ENCODE measurements at regions of chr1 and their contacts with region 1.

Region 1: DNA sequence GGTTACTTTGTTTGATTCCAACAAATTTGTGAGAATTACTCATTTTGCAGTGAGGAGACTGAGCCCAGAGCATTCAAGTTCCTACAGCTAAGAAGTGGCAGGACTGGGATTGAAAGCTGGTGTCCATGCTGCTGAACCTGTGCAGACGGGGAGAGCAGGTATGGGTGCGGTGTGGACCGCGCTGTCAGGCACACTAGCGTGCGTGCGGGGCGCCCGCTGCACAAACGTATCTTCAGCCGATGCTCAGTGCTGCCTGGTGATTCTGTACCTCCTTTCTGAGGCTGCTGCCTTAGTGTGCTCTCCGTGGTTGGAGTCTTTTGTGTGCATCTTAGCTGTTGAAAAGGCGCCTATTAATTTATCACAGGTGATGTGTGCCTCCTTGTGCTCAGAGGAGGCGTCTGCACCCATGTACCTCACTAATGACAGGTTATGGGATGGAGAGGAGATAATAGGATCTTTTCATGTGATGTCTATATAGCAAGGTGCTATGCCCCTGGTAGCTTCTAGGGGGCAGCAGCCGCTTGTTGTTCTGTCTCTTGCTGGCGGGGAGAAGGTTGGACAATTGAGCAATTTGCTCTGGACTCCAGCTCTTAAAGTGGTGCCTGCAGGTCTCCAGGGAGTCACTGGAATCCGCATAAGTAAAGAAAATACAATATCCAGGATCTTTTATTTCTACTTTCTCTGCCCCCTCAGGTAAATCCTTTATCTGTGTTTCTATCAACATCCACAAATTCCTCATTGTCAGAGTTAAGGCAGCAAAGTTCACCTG is 32.5 kb downstream of the PEX14 start:
- DNase-seq: peak; percentile 70
- ATAC-seq: peak; percentile 39
- H3K4me3 ChIP-seq: no peak overlapping the region
- H3K27ac ChIP-seq: no peak overlapping the region
- H3K4me1 ChIP-seq: peaks cover 42% of the 10 kb centered on the region
- H3K27me3 ChIP-seq: no peaks in the 10 kb centered on the region
- CTCF ChIP-seq: peak; percentile 89

Region 2: DNA sequence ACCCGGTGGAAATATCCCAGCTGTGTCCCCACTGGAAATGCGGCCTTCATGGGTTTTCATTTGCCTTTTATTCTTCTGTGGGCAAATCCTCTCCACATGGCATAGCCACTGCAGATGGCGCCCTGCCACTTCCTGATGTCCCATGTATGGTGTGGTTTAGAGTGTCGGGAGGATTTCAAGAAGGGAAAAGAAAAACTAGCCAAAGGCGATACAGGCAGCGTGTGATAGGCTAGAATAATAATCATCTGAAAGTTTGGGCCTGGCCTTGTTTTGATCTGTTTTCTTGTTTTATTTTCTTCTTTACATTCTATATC is 91.1 kb after region 1 on chr1:
- CTCF ChIA-PET with region 1: no interaction called
- POLR2A ChIA-PET with region 1: no interaction called
- intact Hi-C with region 1: loop called (anchors 1 kb)
- DNase-seq: peak; percentile 10
- ATAC-seq: no peak
- H3K4me3 ChIP-seq: no peak overlapping the region
- H3K27ac ChIP-seq: peak overlapping the region; percentile 88
- H3K4me1 ChIP-seq: peaks cover 23% of the 10 kb centered on the region
- H3K27me3 ChIP-seq: no peaks in the 10 kb centered on the region
- CTCF ChIP-seq: 0 out of 2 replicates have a peak, but pooled peaks have one; percentile 29

Region 3: GRCh38 chr1:10635085-10635896 is 128.0 kb after region 1 on chr1:
- CTCF ChIA-PET with region 1: interaction called, 3 read pairs
- POLR2A ChIA-PET with region 1: no interaction called
- intact Hi-C with region 1: loop called (anchors 1 kb)
- DNase-seq: peak; percentile 79
- ATAC-seq: peak; percentile 73
- H3K4me3 ChIP-seq: peak overlapping the region; percentile 46; the same call in 1 of the 2 replicates
- H3K27ac ChIP-seq: peak overlapping the region; percentile 92
- H3K4me1 ChIP-seq: peaks cover 24% of the 10 kb centered on the region
- H3K27me3 ChIP-seq: no peaks in the 10 kb centered on the region
- CTCF ChIP-seq: peak; percentile 51

Region 4: DNA sequence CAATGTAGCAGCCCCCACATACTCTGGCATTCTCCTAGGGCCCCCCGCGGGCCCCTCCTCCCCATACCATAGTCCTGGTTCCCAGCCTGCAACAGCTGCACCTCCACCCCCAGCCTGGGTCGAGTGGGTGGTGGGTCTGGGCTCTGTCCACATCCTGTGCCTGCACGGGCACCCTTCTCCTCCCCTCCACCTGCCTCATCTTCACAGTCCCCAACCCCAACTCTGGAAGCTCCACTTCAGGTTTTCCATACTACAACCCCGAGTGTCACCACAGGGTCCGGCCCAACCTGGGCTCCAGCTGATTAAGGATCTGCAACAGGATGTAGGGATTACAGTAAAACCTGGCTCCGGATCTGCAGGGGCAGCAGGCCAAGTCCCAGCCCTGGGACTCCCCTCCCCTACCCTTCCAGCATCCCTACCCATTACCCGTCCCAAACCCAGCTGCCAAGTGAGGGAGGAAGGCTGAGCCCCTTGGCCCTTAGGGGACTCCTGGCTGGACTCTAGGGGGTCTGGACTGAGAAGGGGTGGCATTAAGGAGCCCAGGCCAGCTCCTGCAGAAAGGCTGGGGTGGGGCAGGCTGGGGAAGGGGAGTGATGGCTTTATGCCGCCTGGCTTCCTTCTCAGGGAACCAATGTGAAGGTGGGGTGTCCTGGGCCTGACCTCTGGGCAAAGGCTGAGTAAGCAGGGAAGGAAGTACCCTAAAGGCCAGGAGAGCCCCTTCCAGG is 172.4 kb after region 1 on chr1:
- CTCF ChIA-PET with region 1: interaction called, 3 read pairs
- POLR2A ChIA-PET with region 1: no interaction called
- intact Hi-C with region 1: loop called (anchors 5 kb)
- DNase-seq: peak; percentile 82
- ATAC-seq: peak; percentile 52
- H3K4me3 ChIP-seq: no peak overlapping the region
- H3K27ac ChIP-seq: no peak overlapping the region
- H3K4me1 ChIP-seq: peaks cover 16% of the 10 kb centered on the region
- H3K27me3 ChIP-seq: no peaks in the 10 kb centered on the region
- CTCF ChIP-seq: no peak

Region 5: DNA sequence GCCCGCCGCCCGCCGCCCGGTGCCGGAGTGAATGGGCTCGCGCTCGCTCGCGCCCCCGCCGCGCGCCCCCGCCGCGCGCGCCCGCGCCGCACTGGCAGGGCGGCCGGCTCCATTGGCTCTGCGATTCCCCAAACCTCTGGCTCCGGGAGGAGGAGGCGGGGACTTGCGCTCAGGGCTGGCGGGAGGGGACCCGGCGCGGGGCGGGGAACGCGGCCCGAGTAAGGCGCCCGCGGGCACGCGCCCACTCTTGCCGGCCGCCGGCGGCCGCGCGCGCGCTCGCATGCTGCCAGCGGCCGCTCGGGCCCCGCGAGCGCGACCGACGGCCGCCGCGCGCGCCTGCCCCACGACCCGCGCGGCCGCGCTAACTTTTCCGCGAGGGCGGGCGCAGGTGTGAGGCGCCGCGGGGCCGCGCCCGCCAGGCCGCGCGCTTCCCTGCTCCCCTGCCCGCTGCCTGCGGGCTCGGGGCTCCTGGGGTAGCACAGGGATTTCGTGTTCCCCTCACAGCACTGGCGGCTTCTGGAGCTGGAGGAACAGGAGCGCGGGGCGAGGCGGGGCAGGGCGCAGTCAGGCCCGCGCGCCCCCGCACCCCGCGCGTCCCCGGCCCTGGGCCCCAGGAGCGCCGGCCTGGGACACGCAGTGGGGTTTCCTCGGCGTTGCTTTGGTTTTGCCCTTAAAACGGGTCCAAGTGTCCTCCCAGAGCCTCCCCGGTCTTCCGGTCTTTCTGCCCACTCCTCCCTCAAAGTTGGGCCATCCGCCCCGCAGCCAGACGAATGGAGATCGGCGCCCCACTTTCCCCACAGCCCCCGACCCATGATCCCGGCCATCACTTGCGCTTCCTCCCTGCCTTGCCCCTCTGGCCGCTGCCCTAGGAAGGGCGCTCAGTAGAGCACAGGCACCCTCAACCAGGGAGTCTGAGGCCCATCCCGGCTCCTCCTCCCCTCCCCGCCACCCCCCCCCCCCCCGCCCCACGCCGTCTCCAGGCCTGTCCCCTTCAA is 187.6 kb after region 1 on chr1:
- CTCF ChIA-PET with region 1: no interaction called
- POLR2A ChIA-PET with region 1: no interaction called
- intact Hi-C with region 1: loop called (anchors 2 kb)
- DNase-seq: peak; percentile 86
- ATAC-seq: peak; percentile 75
- H3K4me3 ChIP-seq: peak overlapping the region; percentile 63
- H3K27ac ChIP-seq: no peak overlapping the region
- H3K4me1 ChIP-seq: peaks cover 29% of the 10 kb centered on the region
- H3K27me3 ChIP-seq: no peaks in the 10 kb centered on the region
- CTCF ChIP-seq: no peak

Region 6: DNA sequence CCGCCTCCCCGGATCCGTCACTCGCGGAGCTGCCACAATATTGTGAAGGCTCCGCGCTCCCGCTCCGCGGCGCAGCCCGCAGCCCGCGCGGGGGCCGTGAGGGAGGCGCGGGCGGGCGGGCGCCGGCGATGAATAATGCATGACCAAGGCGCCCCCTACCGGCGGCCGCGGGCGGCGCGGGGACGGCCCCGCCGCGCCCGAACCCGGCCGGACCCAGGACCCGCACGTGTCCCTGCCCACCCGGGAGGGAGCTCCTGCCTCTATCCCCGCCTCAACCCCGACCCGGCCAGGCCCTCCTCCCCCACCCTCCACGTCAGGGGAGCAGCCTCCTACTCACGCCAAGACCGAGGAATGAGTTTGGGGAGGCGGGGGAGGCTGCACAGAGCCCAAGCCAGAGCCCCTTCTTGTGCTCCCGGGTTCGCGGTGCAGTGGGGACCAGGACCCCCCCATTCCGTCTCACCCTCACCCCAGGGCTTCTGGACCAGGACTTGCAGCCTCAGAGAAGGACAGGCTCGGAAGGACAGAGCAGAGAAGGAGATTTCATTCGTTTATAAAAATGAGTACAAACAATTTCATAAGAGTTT is 359.9 kb after region 1 on chr1:
- CTCF ChIA-PET with region 1: no interaction called
- POLR2A ChIA-PET with region 1: no interaction called
- intact Hi-C with region 1: loop called (anchors 2 kb)
- DNase-seq: peak; percentile 69
- ATAC-seq: peak; percentile 88
- H3K4me3 ChIP-seq: peak overlapping the region; percentile 67
- H3K27ac ChIP-seq: no peak overlapping the region
- H3K4me1 ChIP-seq: peaks cover 4% of the 10 kb centered on the region; the same call in 1 of the 2 replicates
- H3K27me3 ChIP-seq: no peaks in the 10 kb centered on the region
- CTCF ChIP-seq: peak; percentile 52

Region 7: GRCh38 chr1:10960411-10961299 is 453.4 kb after region 1 on chr1:
- CTCF ChIA-PET with region 1: no interaction called
- POLR2A ChIA-PET with region 1: no interaction called
- intact Hi-C with region 1: loop called (anchors 10 kb)
- DNase-seq: peak; percentile 85
- ATAC-seq: peak; percentile 99
- H3K4me3 ChIP-seq: no peak overlapping the region; the same call in 1 of the 2 replicates
- H3K27ac ChIP-seq: no peak overlapping the region
- H3K4me1 ChIP-seq: no peaks in the 10 kb centered on the region
- H3K27me3 ChIP-seq: no peaks in the 10 kb centered on the region
- CTCF ChIP-seq: peak; percentile 85